ENCODE measurements at regions of chr7 and their contacts with region 1.

Region 1: DNA sequence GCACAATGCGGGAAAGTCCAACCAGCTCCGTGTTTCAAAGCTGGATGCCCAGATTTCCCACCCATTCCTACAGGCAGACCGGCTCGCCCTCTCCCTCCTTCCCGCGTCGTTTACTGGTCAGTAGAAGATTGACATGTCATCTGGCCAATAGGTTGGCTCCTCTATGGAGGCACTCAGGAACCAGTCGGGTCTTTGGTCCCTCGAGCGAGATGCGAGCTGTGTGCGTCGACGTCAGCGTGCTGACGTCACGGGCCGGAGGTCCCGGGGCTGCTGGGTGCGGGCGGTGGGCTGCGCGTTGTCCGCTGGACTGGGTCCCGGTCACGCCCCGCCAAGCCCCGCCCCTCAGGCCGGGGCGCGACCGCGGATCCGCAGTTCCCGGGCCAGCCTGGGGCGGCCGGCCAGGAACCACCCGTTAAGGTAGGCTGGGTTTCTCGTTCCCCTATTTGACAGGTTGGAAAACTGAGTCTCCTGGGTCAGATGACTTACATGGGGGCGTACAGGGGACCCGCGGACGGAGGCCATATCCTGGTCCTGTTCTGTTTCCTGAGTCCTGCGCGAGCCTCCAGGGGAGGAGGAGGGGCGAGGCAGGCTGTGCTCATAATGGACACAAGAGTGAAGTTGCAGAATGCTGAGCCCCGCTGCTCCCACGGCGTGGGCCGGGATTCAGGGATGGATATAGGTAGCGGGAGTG is at the start of gene STARD3NL:
- DNase-seq: peak; percentile 97
- ATAC-seq: peak; percentile 99
- H3K4me3 ChIP-seq: peak within 1 kb of the TSS; percentile 52 to 70
- H3K27ac ChIP-seq: peak within 1 kb of the TSS; percentile 51 to 79
- H3K4me1 ChIP-seq: peaks cover 3 to 8% of the 10 kb centered on the region in 2 donors
- H3K27me3 ChIP-seq: no peaks in the 10 kb centered on the region
- total RNA-seq, gene STARD3NL: 32.3 to 37.6 TPM

Region 2: GRCh38 chr7:37352974-37353948 is 824.9 kb before region 1 on chr7:
- intact Hi-C with region 1: loop called in 1 of 2 experiments (anchors 5 kb)
- DNase-seq: peak in 1 of 2 donors; percentile 51
- ATAC-seq: no peak
- H3K4me3 ChIP-seq: no peak overlapping the region
- H3K27ac ChIP-seq: peak overlapping the region; percentile 32 to 79
- H3K4me1 ChIP-seq: peaks cover 0 to 4% of the 10 kb centered on the region in 2 donors
- H3K27me3 ChIP-seq: no peaks in the 10 kb centered on the region

Region 3: DNA sequence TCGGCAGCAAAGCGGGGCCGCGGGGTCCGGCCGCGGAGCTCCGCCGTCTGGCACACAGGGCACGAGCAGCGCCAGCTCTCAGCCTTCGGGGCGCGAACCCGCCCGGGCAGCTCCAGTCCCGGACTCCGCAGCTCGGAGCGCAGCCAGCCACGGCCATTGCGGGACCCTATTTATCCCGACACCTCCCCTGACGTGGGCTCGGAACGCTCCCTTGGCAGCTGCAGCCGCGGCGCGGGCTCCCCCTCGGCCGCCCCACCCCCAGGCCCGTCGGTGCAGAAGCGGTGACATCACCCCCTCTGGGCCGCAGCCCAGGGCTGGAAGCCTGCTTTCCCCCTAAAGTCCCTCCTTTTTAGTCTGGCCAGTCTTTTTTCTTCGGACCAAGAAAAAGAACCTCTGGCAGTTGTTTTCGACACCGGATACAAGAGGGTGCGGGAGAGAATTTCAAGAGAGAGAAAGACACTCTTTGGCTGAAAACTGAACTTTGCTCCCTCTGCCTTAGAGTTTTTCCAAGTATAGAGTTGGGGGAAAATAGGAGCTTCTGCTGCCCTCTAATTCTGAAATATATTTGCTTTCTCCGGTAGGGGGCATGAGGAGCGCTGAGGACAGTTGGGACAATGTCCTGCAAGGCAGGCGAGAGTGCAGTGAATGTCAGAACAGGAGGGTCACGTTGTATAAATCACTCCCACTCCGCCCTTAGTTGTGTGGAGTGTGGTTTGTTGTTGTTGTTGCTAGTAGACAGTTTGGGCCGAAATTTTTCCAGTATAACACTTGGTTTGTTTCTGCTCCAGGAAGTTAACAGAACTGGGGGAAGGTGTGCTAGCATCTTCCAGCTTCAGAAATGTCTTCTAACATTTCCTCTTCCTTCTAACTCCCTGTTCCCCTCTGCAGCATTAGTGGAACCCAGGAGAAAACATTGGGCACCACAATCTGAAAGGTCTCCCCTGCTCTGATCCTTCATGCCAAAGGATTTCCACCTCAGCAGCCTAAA is 261.2 kb before region 1 on chr7 and contains the start of gene SFRP4:
- intact Hi-C with region 1: loop called in 1 of 2 experiments (anchors 5 kb)
- DNase-seq: peak; percentile 88 to 93
- ATAC-seq: peak; percentile 89
- H3K4me3 ChIP-seq: peak within 1 kb of the TSS; percentile 35 to 41
- H3K27ac ChIP-seq: peak within 1 kb of the TSS; percentile 24 to 53
- H3K4me1 ChIP-seq: peaks cover 0 to 4% of the 10 kb centered on the region in 2 donors
- H3K27me3 ChIP-seq: no peaks in the 10 kb centered on the region
- total RNA-seq, gene SFRP4: 98.6 to 302 TPM

Region 4: GRCh38 chr7:38215735-38216670 is 37.9 kb after region 1 on chr7:
- intact Hi-C with region 1: loop called in 1 of 2 experiments (anchors 2 kb)
- DNase-seq: peak; percentile 88 to 89
- ATAC-seq: peak; percentile 93
- H3K4me3 ChIP-seq: no peak overlapping the region
- H3K27ac ChIP-seq: no peak overlapping the region
- H3K4me1 ChIP-seq: no peaks in the 10 kb centered on the region
- H3K27me3 ChIP-seq: no peaks in the 10 kb centered on the region

Region 5: DNA sequence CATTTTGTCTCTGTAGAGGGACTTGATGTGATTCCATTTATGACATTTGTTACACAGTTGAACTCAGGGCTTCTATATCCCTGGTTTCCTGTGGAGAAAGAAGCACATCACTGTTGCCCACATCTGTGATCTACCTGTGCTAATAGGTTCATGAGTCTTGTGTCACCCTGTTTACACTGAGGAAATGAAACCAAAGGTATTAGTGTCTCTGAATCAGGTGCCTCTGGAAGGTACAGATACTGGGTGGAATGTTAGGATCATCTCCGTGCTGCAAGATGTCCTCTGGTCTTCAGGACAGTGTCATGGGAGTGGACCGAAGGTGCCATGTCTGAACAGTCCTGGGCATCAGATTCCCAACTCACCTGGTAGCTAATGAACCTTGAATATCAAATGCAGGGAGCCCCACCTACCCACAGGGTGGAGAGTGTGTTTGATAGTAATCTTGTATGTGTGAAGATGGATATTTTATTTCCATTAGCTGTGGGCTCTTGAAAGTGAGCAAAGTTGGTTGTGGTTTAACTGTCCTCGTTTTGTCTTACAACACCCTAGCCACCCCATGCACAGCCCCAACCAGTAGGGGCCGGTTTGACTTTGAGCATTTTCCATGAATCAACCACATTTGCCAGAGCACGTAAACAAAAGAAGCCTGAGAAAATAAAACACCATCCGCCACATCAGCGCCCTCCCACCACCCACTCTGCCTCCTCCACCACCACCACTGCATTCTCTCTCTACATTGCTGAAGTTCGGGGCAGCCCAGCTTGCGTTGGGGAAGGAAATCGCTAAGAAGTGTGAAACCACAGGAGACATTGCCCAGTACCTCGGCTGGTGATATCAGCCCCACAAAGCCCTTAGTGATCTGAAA is 54.6 kb after region 1 on chr7:
- intact Hi-C with region 1: no loop called
- DNase-seq: peak in 1 of 2 donors; percentile 58
- ATAC-seq: peak; percentile 54
- H3K4me3 ChIP-seq: no peak overlapping the region
- H3K27ac ChIP-seq: no peak overlapping the region
- H3K4me1 ChIP-seq: no peaks in the 10 kb centered on the region
- H3K27me3 ChIP-seq: no peaks in the 10 kb centered on the region